ENCODE measurements at regions of chr19 and their contacts with region 1.

Region 1: DNA sequence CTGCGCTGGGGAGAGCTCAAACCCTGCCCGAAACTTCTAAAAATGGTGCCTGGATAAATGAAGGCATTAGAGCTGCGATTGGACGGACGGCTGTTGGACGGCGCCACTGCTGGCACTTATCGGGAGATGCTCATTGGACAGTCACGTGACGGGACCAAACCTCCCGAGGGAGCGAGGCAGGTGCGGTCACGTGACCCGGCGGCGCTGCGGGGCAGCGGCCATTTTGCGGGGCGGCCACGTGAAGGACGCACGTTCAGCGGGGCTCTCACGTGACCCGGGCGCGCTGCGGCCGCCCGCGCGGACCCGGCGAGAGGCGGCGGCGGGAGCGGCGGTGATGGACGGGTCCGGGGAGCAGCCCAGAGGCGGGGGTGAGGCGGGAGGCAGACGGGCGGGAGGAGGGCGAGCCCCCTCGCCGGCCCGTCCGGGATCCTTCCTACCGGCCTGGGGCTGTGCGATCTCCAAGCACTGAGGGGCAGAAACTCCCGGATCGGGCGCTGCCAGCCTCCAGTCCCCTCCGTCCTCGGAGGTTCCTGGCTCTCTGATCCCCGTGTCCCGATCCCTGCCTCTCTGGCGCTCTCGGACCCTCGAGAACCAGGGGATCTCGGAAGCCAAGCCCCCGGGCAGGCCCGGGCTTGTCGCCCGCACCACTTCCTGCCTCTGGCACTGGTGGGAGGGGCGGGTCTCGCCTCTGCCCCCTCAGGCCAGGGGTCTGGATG is at the start of gene BAX:
- DNase-seq: peak; percentile 92
- ATAC-seq: peak; percentile 98
- H3K4me3 ChIP-seq: peak within 1 kb of the TSS; percentile 98
- H3K27ac ChIP-seq: peak within 1 kb of the TSS; percentile 99
- H3K4me1 ChIP-seq: peaks cover 5% of the 10 kb centered on the region; the same call in 1 of the 2 replicates
- H3K27me3 ChIP-seq: no peaks in the 10 kb centered on the region
- CTCF ChIP-seq: peak in 1 of 3 experiments; percentile 18; a peak in 1 of 6 replicates
- EP300 ChIP-seq: no peak
- POLR2A ChIP-seq: peak; percentile 86
- RAD21 ChIP-seq: 0 out of 2 replicates have a peak, but pooled peaks have one; percentile 20
- polyA plus RNA-seq, gene BAX: 7.2 to 15.3 TPM

Region 2: DNA sequence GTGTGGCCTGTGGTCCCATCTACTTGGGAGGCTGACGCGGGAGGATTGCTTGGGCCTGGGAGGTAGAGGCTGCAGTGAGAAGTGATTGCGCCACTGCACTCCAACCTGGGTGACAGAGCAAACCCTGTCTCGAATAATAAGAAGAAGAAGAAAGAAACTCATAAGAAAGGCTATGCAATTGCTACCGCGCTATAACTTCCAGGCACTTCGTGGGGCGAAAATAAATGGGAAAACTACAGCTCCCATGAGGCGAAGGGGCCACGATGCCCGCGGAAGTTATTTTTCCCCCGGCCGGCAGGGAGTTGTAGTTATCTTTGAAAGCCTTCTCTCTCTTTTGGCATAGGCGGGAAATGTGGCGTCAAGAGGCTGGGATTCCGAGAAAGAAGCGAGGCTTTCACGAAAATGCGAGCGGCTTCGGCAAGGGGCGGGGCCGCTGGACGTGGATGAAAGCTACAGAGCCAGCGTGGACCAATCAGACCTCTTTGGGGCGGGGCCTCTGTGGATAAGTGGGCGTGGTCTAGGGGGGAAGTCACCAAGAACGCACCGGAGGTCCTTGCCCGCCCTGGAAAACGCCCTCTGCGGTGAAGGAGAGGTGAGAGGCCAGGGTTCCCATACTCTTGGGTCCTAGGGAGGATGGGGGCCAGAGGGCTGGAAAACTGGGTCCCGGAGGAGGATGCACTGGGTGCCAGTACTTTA is 54.8 kb before region 1 on chr19 and contains the start of gene NUCB1:
- CTCF ChIA-PET with region 1: interaction called, 4 read pairs
- POLR2A ChIA-PET with region 1: interaction called, 13 read pairs
- RAD21 ChIA-PET with region 1: interaction called, 4 read pairs
- SMC1A ChIA-PET with region 1: interaction called, 7 read pairs
- in situ Hi-C with region 1: no loop called
- intact Hi-C with region 1: no loop called
- DNase-seq: peak; percentile 89
- ATAC-seq: peak; percentile 95
- H3K4me3 ChIP-seq: peak within 1 kb of the TSS; percentile 99
- H3K27ac ChIP-seq: peak within 1 kb of the TSS; percentile 47
- H3K4me1 ChIP-seq: no peaks in the 10 kb centered on the region; the same call in 1 of the 2 replicates
- H3K27me3 ChIP-seq: no peaks in the 10 kb centered on the region
- CTCF ChIP-seq: 0 out of 6 replicates have a peak, but pooled peaks of 1 of the 3 experiments have one; percentile 13
- EP300 ChIP-seq: no peak
- POLR2A ChIP-seq: peak; percentile 69
- RAD21 ChIP-seq: no peak
- polyA plus RNA-seq, gene NUCB1: 1.8 to 3.2 TPM

Region 3: GRCh38 chr19:48970923-48971395 is 16.2 kb after region 1 on chr19:
- CTCF ChIA-PET with region 1: interaction called, 8 read pairs
- POLR2A ChIA-PET with region 1: interaction called, 6 read pairs
- RAD21 ChIA-PET with region 1: interaction called, 5 read pairs
- SMC1A ChIA-PET with region 1: interaction called, 14 read pairs
- in situ Hi-C with region 1: no loop called
- intact Hi-C with region 1: no loop called
- DNase-seq: no peak
- ATAC-seq: peak; percentile 85
- H3K4me3 ChIP-seq: no peak overlapping the region
- H3K27ac ChIP-seq: 0 out of 2 replicates have a peak overlapping the region, but pooled peaks have one; percentile 13
- H3K4me1 ChIP-seq: peaks cover 17% of the 10 kb centered on the region
- H3K27me3 ChIP-seq: no peaks in the 10 kb centered on the region
- CTCF ChIP-seq: peak; percentile 92 to 97 (median 94)
- EP300 ChIP-seq: no peak
- POLR2A ChIP-seq: no peak
- RAD21 ChIP-seq: peak; percentile 86